PC-9 (cell line): ENCODE measurements at regions of chr7 and their contacts with region 1.

Region 1: GRCh38 chr7:2821161-2821841 is 22.8 kb downstream of the GNA12 start:
- DNase-seq: peak; percentile 38 to 86
- H3K4me3 ChIP-seq: peak overlapping the region; percentile 20; the same call in 1 of the 2 replicates
- H3K27ac ChIP-seq: peak overlapping the region; percentile 95
- H3K4me1 ChIP-seq: peaks cover 67% of the 10 kb centered on the region
- H3K27me3 ChIP-seq: no peaks in the 10 kb centered on the region
- CTCF ChIP-seq: peak; percentile 26; the same call in 1 of the 2 replicates

Region 2: DNA sequence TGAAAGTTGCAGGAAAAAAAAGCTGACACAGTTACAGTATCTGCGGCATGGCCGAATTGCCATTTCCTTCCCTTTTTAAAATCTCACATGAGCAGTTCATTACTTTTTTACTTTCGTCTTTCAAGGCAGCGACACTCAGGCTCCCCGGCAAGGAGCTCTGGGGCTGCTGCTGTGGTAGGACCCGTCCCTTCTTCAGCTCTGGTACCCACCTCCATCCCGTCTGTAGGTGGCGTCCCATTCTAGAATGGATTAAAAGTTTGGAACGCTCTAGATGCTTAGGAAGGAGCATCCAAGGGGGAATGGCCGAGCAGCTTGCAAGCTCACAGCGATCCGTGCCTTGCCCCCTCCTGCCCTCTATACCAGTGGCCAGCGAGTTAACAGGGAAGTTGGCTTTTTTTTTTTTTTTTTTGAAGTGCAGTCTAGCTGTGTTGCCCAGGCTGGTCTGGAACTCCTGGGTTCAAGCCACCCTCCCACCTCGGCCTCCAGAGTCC is 212.3 kb before region 1 on chr7:
- CTCF ChIA-PET with region 1: no interaction called
- POLR2A ChIA-PET with region 1: no interaction called
- intact Hi-C with region 1: no loop called
- DNase-seq: no peak
- H3K4me3 ChIP-seq: no peak overlapping the region
- H3K27ac ChIP-seq: no peak overlapping the region
- H3K4me1 ChIP-seq: no peaks in the 10 kb centered on the region
- H3K27me3 ChIP-seq: no peaks in the 10 kb centered on the region
- CTCF ChIP-seq: no peak

Region 3: DNA sequence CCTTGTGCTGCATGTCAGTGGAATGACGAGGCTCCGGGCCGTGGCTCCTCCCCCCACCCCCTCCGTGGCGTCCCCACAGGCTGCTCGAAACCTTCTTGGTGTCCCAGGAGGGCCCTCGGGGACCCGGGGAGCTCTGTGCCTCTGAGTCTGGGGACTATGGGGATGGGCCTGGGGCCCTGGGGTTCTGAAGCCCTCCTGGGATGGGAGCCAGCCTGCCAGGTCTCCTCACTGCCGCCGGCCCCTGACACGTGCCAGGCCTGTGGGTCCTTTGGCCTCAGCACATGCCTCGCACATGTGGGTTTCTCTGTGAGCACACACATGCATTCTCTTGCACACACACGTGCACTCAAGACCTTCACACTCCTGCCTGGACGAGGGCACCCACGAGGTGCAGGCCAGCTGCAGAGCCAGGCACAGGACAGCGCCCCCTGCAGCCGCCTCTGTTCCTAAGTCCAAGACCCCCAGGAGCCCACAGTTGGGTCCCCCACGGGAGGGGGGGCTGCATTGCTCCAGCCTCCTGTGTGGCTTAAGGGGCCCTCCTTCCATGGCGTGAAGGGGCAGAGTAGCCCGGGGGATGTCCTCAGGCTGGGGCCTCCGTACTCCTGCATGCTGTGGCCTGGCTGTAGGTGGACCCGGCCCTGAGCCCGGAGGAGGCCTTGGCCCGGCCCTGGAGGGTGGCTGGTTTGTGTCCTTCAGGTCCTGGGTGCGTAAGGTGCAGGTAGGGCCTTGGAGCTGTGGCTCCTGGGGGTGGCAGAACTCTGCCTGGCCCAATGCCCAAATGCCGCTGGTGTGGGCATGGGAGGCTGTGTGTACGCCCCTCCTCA is 160.5 kb before region 1 on chr7:
- CTCF ChIA-PET with region 1: interaction called, 12 read pairs
- POLR2A ChIA-PET with region 1: no interaction called
- intact Hi-C with region 1: no loop called
- DNase-seq: no peak
- H3K4me3 ChIP-seq: no peak overlapping the region
- H3K27ac ChIP-seq: no peak overlapping the region
- H3K4me1 ChIP-seq: no peaks in the 10 kb centered on the region
- H3K27me3 ChIP-seq: no peaks in the 10 kb centered on the region
- CTCF ChIP-seq: peak; percentile 41; the same call in 1 of the 2 replicates

Region 4: DNA sequence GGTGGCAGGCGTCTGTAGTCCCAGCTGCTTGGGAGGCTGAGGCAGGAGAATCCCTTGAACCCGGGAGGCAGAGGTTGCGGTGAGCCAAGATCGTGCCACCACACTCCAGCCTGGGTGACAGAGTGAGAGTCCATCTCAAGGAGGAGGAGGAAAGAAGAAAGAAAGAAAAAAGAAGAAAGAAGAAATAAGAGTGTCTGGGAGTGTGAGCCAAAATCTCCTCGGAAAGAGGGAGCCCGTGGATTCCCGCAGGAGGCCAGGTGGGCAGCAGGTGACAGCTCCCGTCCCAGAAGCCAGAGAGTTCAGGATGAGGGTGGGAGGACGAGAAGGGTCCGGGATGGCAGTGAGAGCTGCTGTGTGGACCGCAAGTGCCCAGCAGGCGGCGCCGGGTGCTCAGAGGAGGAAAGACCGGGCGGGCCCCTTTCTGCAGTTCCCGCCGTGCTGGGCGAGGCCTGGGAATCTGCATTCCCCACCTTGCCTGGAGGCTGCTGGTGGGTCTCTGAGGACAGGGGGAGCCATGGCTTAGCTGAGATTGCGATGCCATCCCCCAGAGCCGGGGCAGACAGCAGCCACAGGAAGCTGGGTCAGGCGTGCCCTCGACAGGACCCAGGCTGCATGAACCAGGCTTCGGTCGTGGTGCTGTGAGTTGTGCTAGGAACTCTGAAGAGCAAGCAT is 150.4 kb before region 1 on chr7:
- CTCF ChIA-PET with region 1: no interaction called
- POLR2A ChIA-PET with region 1: no interaction called
- intact Hi-C with region 1: no loop called
- DNase-seq: peak in 1 of 2 experiments; percentile 61
- H3K4me3 ChIP-seq: peak overlapping the region; percentile 1; the same call in 1 of the 2 replicates
- H3K27ac ChIP-seq: no peak overlapping the region
- H3K4me1 ChIP-seq: 0 out of 2 replicates have a peak, but pooled peaks cover 5% of the 10 kb centered on the region
- H3K27me3 ChIP-seq: no peaks in the 10 kb centered on the region
- CTCF ChIP-seq: peak; percentile 91

Region 5: GRCh38 chr7:2785071-2785500 is 36.2 kb before region 1 on chr7:
- CTCF ChIA-PET with region 1: interaction called, 3 read pairs
- POLR2A ChIA-PET with region 1: interaction called, 4 read pairs
- intact Hi-C with region 1: loop called (anchors 2 kb)
- DNase-seq: peak; percentile 59 to 99
- H3K4me3 ChIP-seq: no peak overlapping the region; the same call in 1 of the 2 replicates
- H3K27ac ChIP-seq: peak overlapping the region; percentile 94
- H3K4me1 ChIP-seq: peaks cover 45% of the 10 kb centered on the region
- H3K27me3 ChIP-seq: no peaks in the 10 kb centered on the region
- CTCF ChIP-seq: no peak

Region 6: DNA sequence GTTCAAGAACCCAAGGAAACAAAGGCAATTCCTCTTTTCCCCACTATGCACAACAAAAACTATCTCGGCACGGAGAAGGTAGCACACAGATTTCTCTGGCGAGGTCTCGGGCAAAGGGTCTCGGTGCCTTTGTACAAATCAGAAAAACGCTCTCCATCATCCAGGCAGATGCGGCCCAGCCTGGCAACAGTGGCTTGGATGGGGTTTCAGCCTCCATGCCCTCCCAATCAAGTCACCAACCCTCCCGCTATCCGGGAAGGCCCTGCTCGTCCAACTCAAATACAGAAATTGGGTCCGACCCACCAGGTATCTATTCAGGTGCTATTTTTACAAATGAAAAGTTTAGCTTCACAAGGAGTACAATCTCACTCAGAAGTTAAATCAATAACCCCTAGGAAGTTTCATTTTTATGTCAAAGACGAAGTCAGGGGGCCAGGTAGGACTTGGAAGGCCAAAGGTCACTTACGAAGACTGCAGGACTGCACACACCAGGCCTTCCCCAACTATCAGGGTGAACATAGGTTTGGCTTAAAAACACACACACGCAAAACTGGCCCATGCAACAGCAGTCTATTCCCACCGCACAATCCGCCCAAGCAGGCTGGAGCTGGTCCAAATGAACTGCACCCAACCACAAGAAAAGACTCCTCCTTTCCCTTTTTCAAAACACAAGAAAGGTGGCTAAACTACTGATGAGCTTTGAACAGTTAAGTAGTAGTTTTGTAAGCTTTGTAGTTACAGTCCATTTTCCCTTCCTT is 20.2 kb before region 1 on chr7:
- CTCF ChIA-PET with region 1: interaction called, 4 read pairs
- POLR2A ChIA-PET with region 1: no interaction called
- intact Hi-C with region 1: loop called (anchors 1 kb)
- DNase-seq: peak in 1 of 2 experiments; percentile 19
- H3K4me3 ChIP-seq: peak overlapping the region; percentile 55; the same call in 1 of the 2 replicates
- H3K27ac ChIP-seq: peak overlapping the region; percentile 94
- H3K4me1 ChIP-seq: peaks cover 58% of the 10 kb centered on the region
- H3K27me3 ChIP-seq: no peaks in the 10 kb centered on the region
- CTCF ChIP-seq: no peak

Region 7: DNA sequence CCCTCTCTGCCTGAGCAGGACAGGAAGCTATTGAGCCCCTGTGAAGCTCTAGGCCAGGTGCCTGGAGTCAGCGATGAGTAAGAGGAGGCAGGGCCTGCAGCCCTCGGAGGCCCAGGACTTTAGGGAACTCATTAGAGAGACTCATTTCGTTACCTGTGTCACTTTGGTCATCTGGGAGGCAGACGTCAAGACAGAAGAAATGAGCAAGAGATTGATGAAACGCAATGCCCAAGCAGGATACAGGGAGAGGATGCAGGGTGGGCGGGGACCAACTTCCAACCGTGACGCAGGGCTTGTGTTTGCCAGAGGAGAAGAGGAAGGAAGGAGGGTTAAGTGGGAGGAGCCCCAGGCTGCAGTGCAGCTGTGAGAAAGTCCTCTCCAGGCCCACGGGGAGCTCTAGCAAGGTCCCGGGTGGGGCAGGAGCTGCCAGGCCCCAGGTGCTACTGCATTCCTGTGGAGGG is 49.2 kb after region 1 on chr7:
- CTCF ChIA-PET with region 1: interaction called, 5 read pairs
- POLR2A ChIA-PET with region 1: interaction called, 15 read pairs
- intact Hi-C with region 1: no loop called
- DNase-seq: peak; percentile 48 to 81
- H3K4me3 ChIP-seq: no peak overlapping the region
- H3K27ac ChIP-seq: no peak overlapping the region
- H3K4me1 ChIP-seq: peaks cover 17% of the 10 kb centered on the region
- H3K27me3 ChIP-seq: no peaks in the 10 kb centered on the region
- CTCF ChIP-seq: no peak

Region 8: GRCh38 chr7:2903682-2904162 is 82.4 kb after region 1 on chr7:
- CTCF ChIA-PET with region 1: no interaction called
- POLR2A ChIA-PET with region 1: no interaction called
- intact Hi-C with region 1: no loop called
- DNase-seq: no peak
- H3K4me3 ChIP-seq: no peak overlapping the region
- H3K27ac ChIP-seq: no peak overlapping the region
- H3K4me1 ChIP-seq: no peaks in the 10 kb centered on the region
- H3K27me3 ChIP-seq: no peaks in the 10 kb centered on the region
- CTCF ChIP-seq: no peak